ENCODE measurements at regions of chr17 and their contacts with region 1.

Region 1: GRCh38 chr17:28661635-28662537 is at the starts of genes SDF2 and SUPT6H:
- DNase-seq: peak; percentile 91 to 97 (median 95)
- ATAC-seq: peak; percentile 91
- H3K4me3 ChIP-seq: peak within 1 kb of the TSS; percentile 72
- H3K4me3 Mint-ChIP-seq: peak within 1 kb of the TSS; percentile 86 to 100 (median 99)
- H3K27ac ChIP-seq: peak within 1 kb of the TSS; percentile 90
- H3K27ac Mint-ChIP-seq: peak within 1 kb of the TSS; percentile 98 to 100 (median 100)
- H3K4me1 ChIP-seq: peaks cover 24 to 35% of the 10 kb centered on the region in 2 donors
- H3K4me1 Mint-ChIP-seq: peaks cover 45 to 73% (median 67%) of the 10 kb centered on the region in 7 donors
- H3K27me3 ChIP-seq: no peaks in the 10 kb centered on the region
- H3K27me3 Mint-ChIP-seq: no peaks in the 10 kb centered on the region
- total RNA-seq, gene SDF2: 28.6 to 49.5 (median 43.8) TPM
- total RNA-seq, gene SUPT6H: 91.2 to 132 (median 98.5) TPM

Region 2: DNA sequence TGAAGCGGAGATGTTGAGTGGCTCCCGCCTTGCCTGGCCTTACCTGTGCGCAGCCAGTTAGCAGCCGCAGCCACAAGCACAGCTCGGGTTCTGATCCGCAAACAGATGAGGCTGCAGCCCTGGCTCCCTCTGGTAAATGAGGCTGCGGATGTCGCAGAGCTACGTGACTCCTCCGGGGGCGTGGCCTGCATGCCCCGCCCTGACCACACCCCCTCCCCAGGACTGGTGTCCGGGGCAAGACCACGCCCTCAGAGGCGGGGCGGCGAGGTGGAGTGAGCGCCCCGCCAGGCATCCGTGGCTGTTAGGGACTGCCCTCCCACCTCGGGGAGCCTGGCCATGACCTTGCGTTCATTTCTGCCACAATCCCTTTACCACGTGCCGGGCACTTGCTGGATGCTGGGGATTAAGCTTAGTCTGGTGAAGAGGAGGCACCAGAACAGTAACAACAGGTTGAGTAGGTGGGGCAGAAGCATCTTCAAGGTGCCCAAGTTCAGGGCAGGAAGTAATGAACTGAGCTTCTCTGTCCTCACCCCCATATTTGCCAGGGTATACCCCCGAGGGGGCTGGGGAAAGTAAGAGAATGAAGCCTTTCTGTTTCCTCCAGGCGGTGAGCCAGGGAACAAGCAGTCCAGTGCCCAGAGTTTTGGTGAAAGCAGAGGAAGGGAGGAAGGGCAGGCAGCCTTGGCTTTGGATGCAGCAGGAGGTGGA is 85.0 kb before region 1 on chr17 and contains the start of gene ALDOC:
- CTCF ChIA-PET with region 1: no interaction called
- POLR2A ChIA-PET with region 1: interaction called, 6 read pairs
- intact Hi-C with region 1: loop called (anchors 1 to 5 kb)
- DNase-seq: peak; percentile 95 to 99 (median 98)
- ATAC-seq: peak; percentile 100
- H3K4me3 ChIP-seq: peak within 1 kb of the TSS; percentile 50
- H3K4me3 Mint-ChIP-seq: peak within 1 kb of the TSS; percentile 83 to 96 (median 86)
- H3K27ac ChIP-seq: peak within 1 kb of the TSS; percentile 52
- H3K27ac Mint-ChIP-seq: peak within 1 kb of the TSS; percentile 79 to 95 (median 89)
- H3K4me1 ChIP-seq: peaks cover 19 to 23% of the 10 kb centered on the region in 2 donors
- H3K4me1 Mint-ChIP-seq: peaks cover 20 to 70% (median 38%) of the 10 kb centered on the region in 7 donors
- H3K27me3 ChIP-seq: no peaks in the 10 kb centered on the region
- H3K27me3 Mint-ChIP-seq: no peaks in the 10 kb centered on the region
- total RNA-seq, gene ALDOC: 24.5 to 159 (median 40.1) TPM

Region 3: DNA sequence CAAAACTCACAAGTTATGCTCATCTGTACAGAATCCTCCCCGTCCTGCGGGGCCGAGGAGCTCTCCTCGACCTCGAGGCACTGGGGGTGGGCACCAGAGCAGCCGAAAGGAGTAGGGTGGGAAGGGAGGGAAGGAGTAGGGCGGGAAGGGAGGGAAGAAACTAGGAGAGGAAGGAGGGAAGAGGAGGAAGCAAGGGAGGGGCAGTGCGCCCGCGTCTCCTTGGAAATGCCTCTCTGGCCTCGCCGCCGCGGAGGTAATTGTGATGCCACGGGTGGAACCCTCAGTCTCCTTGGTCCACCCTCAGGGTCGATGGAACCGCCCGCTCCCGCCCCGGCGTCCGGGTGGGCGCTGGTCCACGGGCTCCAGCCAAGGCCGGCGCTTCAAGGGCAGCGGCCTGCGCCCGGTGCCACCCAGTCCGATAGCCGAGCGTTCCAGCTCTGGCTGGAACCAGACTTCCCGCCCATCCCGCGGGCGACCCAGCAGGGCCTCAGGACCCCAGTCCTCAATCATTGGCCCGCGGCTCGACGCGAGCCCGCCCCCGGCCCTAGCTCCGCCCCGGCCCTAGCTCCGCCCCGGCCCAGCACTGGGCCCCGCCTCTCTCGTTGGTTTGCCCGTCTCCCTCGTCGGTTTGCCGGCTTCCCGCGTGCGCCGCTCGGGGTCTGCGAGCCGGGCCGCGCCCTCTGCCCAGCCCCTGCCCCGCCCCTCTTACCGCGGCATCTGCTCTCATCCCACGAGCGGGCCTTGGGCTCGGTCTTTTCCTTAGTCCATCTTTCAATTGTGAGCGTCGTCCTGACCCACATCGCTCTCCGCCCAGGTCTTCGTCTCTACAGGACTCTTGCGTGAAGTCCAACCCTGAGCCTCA is 49.2 kb after region 1 on chr17:
- CTCF ChIA-PET with region 1: no interaction called
- POLR2A ChIA-PET with region 1: interaction called, 20 read pairs
- intact Hi-C with region 1: loop called (anchors 2 to 5 kb)
- DNase-seq: peak; percentile 71 to 97 (median 85)
- ATAC-seq: peak; percentile 95
- H3K4me3 ChIP-seq: peak overlapping the region; percentile 95
- H3K4me3 Mint-ChIP-seq: peak overlapping the region; percentile 76 to 94 (median 92)
- H3K27ac ChIP-seq: peak overlapping the region; percentile 83
- H3K27ac Mint-ChIP-seq: peak overlapping the region; percentile 85 to 98 (median 93)
- H3K4me1 ChIP-seq: peaks cover 9 to 12% of the 10 kb centered on the region in 2 donors
- H3K4me1 Mint-ChIP-seq: peaks cover 12 to 29% (median 19%) of the 10 kb centered on the region in 7 donors
- H3K27me3 ChIP-seq: no peaks in the 10 kb centered on the region
- H3K27me3 Mint-ChIP-seq: peaks cover 0 to 14% (median 6%) of the 10 kb centered on the region in 5 donors

Region 4: GRCh38 chr17:28812091-28812747 is 150.3 kb after region 1 on chr17:
- CTCF ChIA-PET with region 1: no interaction called
- POLR2A ChIA-PET with region 1: no interaction called
- intact Hi-C with region 1: loop called in 1 of 2 experiments (anchors 2 kb)
- DNase-seq: peak; percentile 91 to 97 (median 95)
- ATAC-seq: peak; percentile 100
- H3K4me3 ChIP-seq: peak overlapping the region; percentile 85
- H3K4me3 Mint-ChIP-seq: peak overlapping the region; percentile 87 to 99 (median 92)
- H3K27ac ChIP-seq: peak overlapping the region; percentile 96
- H3K27ac Mint-ChIP-seq: peak overlapping the region; percentile 82 to 100 (median 97)
- H3K4me1 ChIP-seq: peaks cover 0 to 16% of the 10 kb centered on the region in 2 donors
- H3K4me1 Mint-ChIP-seq: peaks cover 21 to 49% (median 40%) of the 10 kb centered on the region in 7 donors
- H3K27me3 ChIP-seq: no peaks in the 10 kb centered on the region
- H3K27me3 Mint-ChIP-seq: no peaks in the 10 kb centered on the region

Region 5: GRCh38 chr17:28854457-28855350 is 192.8 kb after region 1 on chr17 and contains the start of gene ERAL1:
- CTCF ChIA-PET with region 1: no interaction called
- POLR2A ChIA-PET with region 1: no interaction called
- intact Hi-C with region 1: no loop called
- DNase-seq: peak; percentile 63 to 87 (median 83)
- ATAC-seq: peak; percentile 100
- H3K4me3 ChIP-seq: peak within 1 kb of the TSS; percentile 86
- H3K4me3 Mint-ChIP-seq: peak within 1 kb of the TSS; percentile 90 to 100 (median 94)
- H3K27ac ChIP-seq: peak within 1 kb of the TSS; percentile 82
- H3K27ac Mint-ChIP-seq: peak within 1 kb of the TSS; percentile 85 to 94 (median 90)
- H3K4me1 ChIP-seq: peaks cover 7 to 12% of the 10 kb centered on the region in 2 donors
- H3K4me1 Mint-ChIP-seq: peaks cover 0 to 27% (median 11%) of the 10 kb centered on the region in 7 donors
- H3K27me3 ChIP-seq: no peaks in the 10 kb centered on the region
- H3K27me3 Mint-ChIP-seq: no peaks in the 10 kb centered on the region
- total RNA-seq, gene ERAL1: 19.8 to 50.0 (median 24.9) TPM

Region 6: GRCh38 chr17:28925912-28926365 is 264.1 kb after region 1 on chr17:
- CTCF ChIA-PET with region 1: no interaction called
- POLR2A ChIA-PET with region 1: no interaction called
- intact Hi-C with region 1: loop called in 1 of 2 experiments (anchors 1 kb)
- DNase-seq: peak in 7 of 9 donors; percentile 66 to 89 (median 82)
- ATAC-seq: peak; percentile 96
- H3K4me3 ChIP-seq: peak overlapping the region; percentile 31
- H3K4me3 Mint-ChIP-seq: peak overlapping the region; percentile 34 to 82 (median 60)
- H3K27ac ChIP-seq: peak overlapping the region; percentile 88
- H3K27ac Mint-ChIP-seq: peak overlapping the region; percentile 93 to 99 (median 96)
- H3K4me1 ChIP-seq: peaks cover 26 to 38% of the 10 kb centered on the region in 2 donors
- H3K4me1 Mint-ChIP-seq: peaks cover 35 to 65% (median 54%) of the 10 kb centered on the region in 7 donors
- H3K27me3 ChIP-seq: no peaks in the 10 kb centered on the region
- H3K27me3 Mint-ChIP-seq: no peaks in the 10 kb centered on the region

Measured in naive thymus-derived CD4-positive, alpha-beta T cell (primary cell).